ENCODE measurements at regions of chr17 and their contacts with region 1.

Region 1: GRCh38 chr17:59859444-59860025 is 33.2 kb downstream of the TUBD1 start:
- DNase-seq: no peak
- ATAC-seq: peak in 3 of 4 donors; percentile 67 to 76 (median 73)
- H3K4me3 ChIP-seq: no peak overlapping the region
- H3K27ac ChIP-seq: no peak overlapping the region
- H3K4me1 ChIP-seq: peaks cover 5 to 44% (median 19%) of the 10 kb centered on the region in 3 donors
- H3K27me3 ChIP-seq: no peaks in the 10 kb centered on the region
- CTCF ChIP-seq: peak in 3 of 4 donors; percentile 39 to 54 (median 49)

Region 2: DNA sequence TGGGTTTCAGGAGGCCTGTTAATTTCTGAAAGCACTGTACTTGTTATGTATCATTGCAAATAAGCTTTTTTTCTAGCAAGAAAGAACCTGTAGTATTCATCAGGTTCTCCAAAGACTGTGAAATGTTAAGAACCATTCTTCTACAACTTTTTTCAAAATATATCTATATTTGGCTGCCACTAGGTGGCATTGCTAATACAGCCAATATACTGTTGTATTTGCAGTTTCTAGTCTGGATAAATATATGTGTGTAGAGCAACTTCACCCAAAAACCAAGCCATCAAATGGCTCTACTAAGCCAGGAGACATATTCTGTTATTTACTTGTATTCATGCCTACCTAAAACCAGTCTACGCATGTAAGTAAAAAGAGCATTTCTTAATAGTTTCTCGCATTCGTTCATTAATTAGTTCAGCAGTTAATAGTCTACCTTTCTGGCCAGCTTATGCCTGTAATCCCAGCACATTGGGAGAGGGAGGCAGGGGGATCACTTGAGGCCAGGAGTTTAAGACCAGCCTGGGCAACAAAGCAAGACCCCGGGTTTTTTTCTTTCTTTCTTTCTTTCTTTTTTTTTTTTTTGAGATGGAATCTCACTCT is 112.6 kb before region 1 on chr17:
- intact Hi-C with region 1: loop called in 2 of 3 experiments (anchors 5 to 10 kb)
- DNase-seq: no peak
- ATAC-seq: peak; percentile 53 to 89 (median 80)
- H3K4me3 ChIP-seq: no peak overlapping the region
- H3K27ac ChIP-seq: no peak overlapping the region
- H3K4me1 ChIP-seq: no peaks in the 10 kb centered on the region
- H3K27me3 ChIP-seq: no peaks in the 10 kb centered on the region
- CTCF ChIP-seq: peak; percentile 19 to 48 (median 42)

Region 3: GRCh38 chr17:59753522-59754467 is 105.7 kb before region 1 on chr17:
- intact Hi-C with region 1: loop called in 2 of 3 experiments (anchors 5 to 10 kb)
- DNase-seq: peak in 1 of 6 donors; percentile 34
- ATAC-seq: peak; percentile 86 to 94 (median 92)
- H3K4me3 ChIP-seq: no peak overlapping the region
- H3K27ac ChIP-seq: peak overlapping the region in 2 of 4 donors; percentile 49 to 79
- H3K4me1 ChIP-seq: peaks cover 4 to 41% (median 22%) of the 10 kb centered on the region in 3 donors
- H3K27me3 ChIP-seq: no peaks in the 10 kb centered on the region
- CTCF ChIP-seq: peak; percentile 31 to 51 (median 39)

Region 4: GRCh38 chr17:59804901-59805465 is 54.6 kb before region 1 on chr17:
- intact Hi-C with region 1: no loop called
- DNase-seq: no peak
- ATAC-seq: peak in 1 of 4 donors; percentile 18
- H3K4me3 ChIP-seq: no peak overlapping the region
- H3K27ac ChIP-seq: peak overlapping the region in 1 of 4 donors; percentile 22
- H3K4me1 ChIP-seq: peaks cover 9 to 17% (median 15%) of the 10 kb centered on the region in 3 donors
- H3K27me3 ChIP-seq: no peaks in the 10 kb centered on the region
- CTCF ChIP-seq: no peak

Measured in pancreas (tissue), 10 donors.